ENCODE measurements at regions of chr2 and their contacts with region 1.

Region 1: DNA sequence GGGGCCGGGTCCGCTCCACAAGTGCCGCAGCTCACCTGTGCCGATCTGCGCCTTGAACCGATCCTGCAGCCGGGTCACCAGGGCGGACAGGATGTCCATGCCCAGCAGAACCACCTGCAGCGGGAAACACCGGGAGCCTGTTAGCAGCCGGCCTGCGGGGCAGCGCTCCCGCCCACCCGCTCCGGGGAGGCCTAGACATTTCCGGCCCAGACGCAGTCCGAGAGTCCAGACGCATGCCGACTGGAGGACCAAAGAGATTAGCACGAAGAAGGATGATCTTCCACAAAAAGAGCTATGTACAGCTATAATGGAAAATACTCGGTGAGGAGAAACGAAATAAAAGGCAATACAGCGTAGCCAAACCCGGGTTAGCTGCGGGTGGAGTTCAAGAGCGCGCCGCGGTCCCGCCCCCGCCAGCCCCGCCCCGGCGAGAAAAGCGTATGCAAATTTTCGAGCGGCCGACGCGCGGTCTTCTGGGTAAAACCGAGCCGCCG is 421 bp upstream of the RNU4ATAC start:
- DNase-seq: peak; percentile 81 to 82
- H3K4me3 ChIP-seq: peak overlapping the region; percentile 15 to 70 (median 39)
- H3K27ac ChIP-seq: peak overlapping the region; percentile 96 to 99 (median 98)
- H3K4me1 ChIP-seq: peaks cover 25 to 26% of the 10 kb centered on the region in 2 donors
- H3K27me3 ChIP-seq: no peaks in the 10 kb centered on the region
- CTCF ChIP-seq: no peak
- POLR2A ChIP-seq: no peak

Region 2: DNA sequence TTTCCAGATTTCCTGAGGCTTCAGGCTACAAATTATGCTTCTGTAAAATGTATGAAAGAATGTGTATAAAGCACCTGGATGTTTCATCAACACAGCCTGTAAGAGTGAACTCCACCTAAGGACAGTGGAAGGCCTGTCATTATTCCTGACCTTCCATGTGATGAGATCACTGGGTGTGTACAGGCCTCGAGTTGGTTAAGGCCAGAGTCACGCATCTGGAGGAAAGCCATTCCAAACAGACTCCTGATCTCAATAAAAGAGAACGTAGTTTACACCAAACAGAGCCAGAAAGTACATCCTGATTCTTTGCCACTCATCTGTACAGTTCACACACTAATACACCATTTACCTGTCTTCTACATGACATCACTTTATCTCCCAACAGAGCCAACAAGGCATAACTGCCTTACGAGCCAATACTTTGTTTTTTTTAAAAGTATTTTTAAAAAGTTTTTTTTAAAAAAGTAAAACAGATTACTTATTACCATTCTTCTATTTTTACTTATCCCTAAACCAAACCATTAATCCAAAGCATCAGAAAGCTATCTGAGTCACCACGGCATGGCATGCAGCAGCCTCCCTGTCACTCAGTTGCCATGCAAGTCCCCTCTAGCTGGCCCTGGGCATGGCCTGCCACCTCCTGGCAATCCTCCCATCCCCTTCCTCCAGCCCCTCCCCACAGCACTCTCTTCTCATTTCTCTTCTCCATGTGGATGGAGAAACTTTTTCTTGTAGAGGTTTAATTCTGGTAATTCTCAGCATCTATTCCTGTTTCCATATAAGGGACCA is 166.4 kb before region 1 on chr2:
- intact Hi-C with region 1: no loop called
- DNase-seq: no peak
- H3K4me3 ChIP-seq: no peak overlapping the region
- H3K27ac ChIP-seq: peak overlapping the region in 2 of 3 donors; percentile 61 to 80
- H3K4me1 ChIP-seq: peaks cover 43 to 46% of the 10 kb centered on the region in 2 donors
- H3K27me3 ChIP-seq: no peaks in the 10 kb centered on the region
- CTCF ChIP-seq: no peak
- POLR2A ChIP-seq: no peak

Region 3: DNA sequence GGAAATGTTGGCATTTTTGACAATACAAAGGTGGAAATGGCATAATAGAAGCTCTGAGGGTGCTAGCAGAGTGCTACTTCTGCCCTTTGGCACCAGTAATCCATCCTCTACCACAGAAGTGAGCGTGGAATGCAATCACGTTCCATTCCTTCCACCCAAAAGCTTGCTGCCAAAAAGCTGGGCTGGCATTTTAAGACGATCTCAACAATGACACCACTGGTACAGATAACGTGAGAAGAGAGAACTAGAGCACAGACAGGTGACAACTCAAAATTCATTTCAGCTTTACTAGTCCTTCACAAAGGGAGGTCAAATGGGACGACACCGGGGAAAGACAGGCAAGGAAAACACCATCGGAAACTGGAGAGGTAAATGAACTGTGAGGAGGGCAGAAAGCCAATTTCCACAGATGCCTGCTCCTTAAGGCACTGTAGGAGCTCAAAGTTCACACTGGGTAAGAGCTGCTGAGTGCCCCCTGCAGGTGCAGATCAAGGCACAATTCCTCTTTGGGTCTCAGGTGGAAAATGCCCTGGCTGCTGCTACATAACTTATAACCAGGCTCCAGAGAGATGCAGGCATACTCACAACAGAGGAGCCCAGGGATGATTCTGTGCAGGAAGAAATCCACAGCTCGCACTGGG is 50.3 kb before region 1 on chr2:
- intact Hi-C with region 1: no loop called
- DNase-seq: peak; percentile 74 to 77
- H3K4me3 ChIP-seq: no peak overlapping the region
- H3K27ac ChIP-seq: peak overlapping the region; percentile 24 to 33 (median 29)
- H3K4me1 ChIP-seq: peaks cover 18 to 27% of the 10 kb centered on the region in 2 donors
- H3K27me3 ChIP-seq: no peaks in the 10 kb centered on the region
- CTCF ChIP-seq: peak in 4 of 6 experiments; percentile 23 to 47 (median 46)
- POLR2A ChIP-seq: no peak

Region 4: DNA sequence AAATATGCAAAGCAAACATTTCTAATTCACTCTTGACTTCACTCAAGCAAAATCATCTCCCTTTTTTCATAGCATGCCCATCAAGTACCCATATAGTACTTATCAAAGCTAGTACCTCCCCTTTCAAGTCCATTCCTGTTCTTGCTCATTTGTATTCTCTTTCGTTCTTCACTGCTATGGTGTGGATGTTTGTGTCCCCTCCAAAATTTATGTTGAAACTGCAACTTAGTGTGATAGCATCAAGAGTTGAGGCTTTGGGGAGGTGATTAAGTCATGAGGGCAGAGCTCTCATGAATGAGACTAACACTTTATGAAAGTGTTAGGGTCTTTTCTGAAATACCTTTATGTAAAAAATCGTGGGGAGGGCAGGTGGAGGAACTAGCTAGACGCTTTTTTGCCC is 53.3 kb after region 1 on chr2:
- intact Hi-C with region 1: no loop called
- DNase-seq: no peak
- H3K4me3 ChIP-seq: no peak overlapping the region
- H3K27ac ChIP-seq: no peak overlapping the region
- H3K4me1 ChIP-seq: peaks cover 7 to 25% of the 10 kb centered on the region in 2 donors
- H3K27me3 ChIP-seq: no peaks in the 10 kb centered on the region
- CTCF ChIP-seq: no peak
- POLR2A ChIP-seq: no peak

Region 5: GRCh38 chr2:121649596-121650314 is 119.5 kb after region 1 on chr2:
- intact Hi-C with region 1: loop called (anchors 10 kb)
- DNase-seq: peak; percentile 97 to 98
- H3K4me3 ChIP-seq: peak overlapping the region; percentile 68 to 87 (median 76)
- H3K27ac ChIP-seq: peak overlapping the region; percentile 94 to 97 (median 96)
- H3K4me1 ChIP-seq: peaks cover 39 to 43% of the 10 kb centered on the region in 2 donors
- H3K27me3 ChIP-seq: no peaks in the 10 kb centered on the region
- CTCF ChIP-seq: no peak
- POLR2A ChIP-seq: no peak

Region 6: GRCh38 chr2:121722479-121722878 is 192.2 kb after region 1 on chr2:
- intact Hi-C with region 1: loop called (anchors 5 kb)
- DNase-seq: no peak
- H3K4me3 ChIP-seq: no peak overlapping the region
- H3K27ac ChIP-seq: no peak overlapping the region
- H3K4me1 ChIP-seq: no peaks in the 10 kb centered on the region
- H3K27me3 ChIP-seq: no peaks in the 10 kb centered on the region
- CTCF ChIP-seq: no peak
- POLR2A ChIP-seq: no peak

Region 7: GRCh38 chr2:121736462-121737341 is 206.4 kb after region 1 on chr2 and contains the start of gene NIFK:
- intact Hi-C with region 1: loop called (anchors 5 kb)
- DNase-seq: peak; percentile 99 to 100
- H3K4me3 ChIP-seq: peak within 1 kb of the TSS; percentile 11 to 93 (median 83)
- H3K27ac ChIP-seq: peak within 1 kb of the TSS; percentile 39 to 67 (median 66)
- H3K4me1 ChIP-seq: peaks cover 4 to 5% of the 10 kb centered on the region in 2 donors
- H3K27me3 ChIP-seq: no peaks in the 10 kb centered on the region
- CTCF ChIP-seq: no peak
- POLR2A ChIP-seq: peak in 1 of 2 donors; percentile 41
- total RNA-seq, gene NIFK: 19.1 to 72.2 (median 35.4) TPM

Measured in thyroid gland (tissue), 4 donors.